ENCODE measurements at regions of chr2 and their contacts with region 1.

Region 1: DNA sequence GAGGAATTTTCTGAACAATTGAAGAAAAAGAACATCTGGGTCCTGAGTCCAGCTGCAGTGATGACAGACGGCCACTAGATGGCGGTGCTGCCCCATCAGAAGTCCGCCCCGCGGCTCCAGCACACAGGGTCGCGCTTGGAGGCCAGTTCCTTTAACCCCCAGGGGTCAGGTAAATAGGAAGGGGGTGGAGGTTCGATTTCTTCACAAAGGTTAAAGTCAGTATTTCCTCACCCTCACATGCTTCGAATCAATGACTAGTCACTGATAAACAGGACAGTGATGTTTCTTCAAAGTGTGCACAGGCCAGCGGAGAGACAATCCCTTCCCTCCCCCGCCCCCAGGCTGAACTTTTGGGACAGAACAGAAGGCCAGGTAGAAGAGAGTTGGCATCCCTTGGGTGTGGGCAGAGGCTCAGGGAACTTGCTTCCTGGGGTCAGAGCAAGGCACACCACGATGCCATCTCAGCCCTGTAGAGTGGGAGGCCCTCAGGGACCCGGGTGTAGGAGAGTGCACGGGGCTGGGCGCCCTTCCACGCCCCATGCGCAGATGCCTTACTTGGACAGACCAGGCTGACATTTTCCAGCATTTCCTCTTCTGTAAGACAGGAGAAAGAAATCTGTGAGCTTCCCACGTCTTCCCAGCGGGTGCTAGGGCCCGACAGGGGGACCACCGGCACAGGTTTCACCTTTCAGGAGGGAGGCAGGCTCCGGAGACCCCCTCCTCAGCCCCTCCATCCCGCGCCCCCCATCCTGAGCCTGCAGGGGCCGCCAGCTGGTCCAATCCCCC is 722 bp downstream of the APOB start:
- DNase-seq: peak; percentile 79
- CTCF ChIP-seq: peak; percentile 90

Region 2: GRCh38 chr2:20976527-20976926 is 66.6 kb before region 1 on chr2:
- in situ Hi-C with region 1: no loop called
- DNase-seq: no peak
- CTCF ChIP-seq: no peak

Region 3: DNA sequence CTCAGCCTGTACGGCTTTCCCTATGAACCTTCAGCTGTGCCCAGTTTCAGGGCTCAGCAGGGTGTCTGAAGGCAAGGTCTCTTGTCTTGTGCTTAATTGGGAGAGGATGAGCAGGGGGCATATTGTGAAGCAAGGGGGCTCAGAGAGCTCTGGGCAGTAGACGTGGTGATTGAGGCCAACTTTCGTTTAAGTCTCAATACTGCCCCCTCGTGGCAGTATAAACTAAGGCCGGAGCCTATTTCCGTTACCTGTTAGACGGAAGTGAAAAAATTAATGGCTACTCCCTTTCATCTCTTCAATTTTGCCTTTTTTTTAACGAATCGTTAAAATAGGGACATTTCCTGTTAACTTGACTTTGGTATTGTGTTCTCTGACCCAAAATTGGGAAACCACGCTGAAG is 274.0 kb after region 1 on chr2:
- in situ Hi-C with region 1: loop called (anchors 25 kb)
- DNase-seq: peak; percentile 57
- CTCF ChIP-seq: peak; percentile 63

Measured in GM13977 (cell line).